ENCODE measurements at regions of chr9 and their contacts with region 1.

Region 1: GRCh38 chr9:129737479-129738274 is 15.2 kb downstream of the PTGES start:
- DNase-seq: peak; percentile 88
- H3K4me3 Mint-ChIP-seq: peak overlapping the region; percentile 53
- H3K27ac Mint-ChIP-seq: peak overlapping the region; percentile 55
- H3K4me1 Mint-ChIP-seq: peaks cover 11% of the 10 kb centered on the region
- H3K27me3 Mint-ChIP-seq: peaks cover 1% of the 10 kb centered on the region

Region 2: DNA sequence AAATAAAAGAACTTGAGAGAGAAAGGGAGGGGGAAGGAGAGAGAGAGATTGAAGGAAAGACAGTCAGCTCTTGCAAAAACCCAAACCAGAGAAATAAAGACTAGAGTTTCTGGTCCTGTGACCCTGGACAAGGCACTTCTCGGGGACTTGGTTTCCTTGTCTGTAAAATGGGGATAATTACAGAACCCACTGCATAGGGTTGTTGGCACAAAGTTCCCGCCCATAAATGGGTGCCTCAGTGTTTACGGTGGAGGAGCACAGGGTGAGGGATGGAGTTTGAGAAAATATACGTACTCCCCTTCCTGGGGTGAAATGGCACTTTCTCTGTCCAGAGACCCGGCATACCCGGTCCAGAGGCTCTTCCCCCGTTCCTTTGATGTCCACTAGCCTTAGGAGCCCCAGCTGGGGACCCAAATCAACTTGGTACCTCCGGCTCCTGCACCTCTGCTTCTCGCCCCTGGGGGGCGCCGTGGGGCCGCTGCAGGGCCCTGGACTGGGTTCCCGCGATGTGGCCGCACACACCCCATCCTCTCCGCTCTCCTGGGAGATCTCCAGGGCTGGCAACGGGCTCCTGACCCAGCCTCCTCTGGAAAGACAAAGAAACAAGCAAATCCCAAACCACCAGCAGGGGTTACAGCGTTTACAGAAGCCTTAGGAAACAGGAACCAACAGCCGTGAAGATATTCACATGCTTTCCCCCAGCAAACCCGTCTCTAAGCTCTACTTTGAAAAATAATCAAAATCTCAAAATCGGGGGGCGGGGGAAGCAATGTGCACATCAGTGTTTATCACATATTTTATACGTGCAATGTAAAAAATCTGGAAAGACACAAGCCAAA is 11.1 kb before region 1 on chr9:
- CTCF ChIA-PET with region 1: interaction called, 81 read pairs
- POLR2A ChIA-PET with region 1: interaction called, 8 read pairs
- DNase-seq: peak; percentile 68
- H3K4me3 Mint-ChIP-seq: no peak overlapping the region
- H3K27ac Mint-ChIP-seq: no peak overlapping the region
- H3K4me1 Mint-ChIP-seq: peaks cover 3% of the 10 kb centered on the region
- H3K27me3 Mint-ChIP-seq: peaks cover 10% of the 10 kb centered on the region

Region 3: GRCh38 chr9:129749992-129750391 is 12.3 kb after region 1 on chr9:
- CTCF ChIA-PET with region 1: interaction called, 15 read pairs
- POLR2A ChIA-PET with region 1: interaction called, 3 read pairs
- DNase-seq: no peak
- H3K4me3 Mint-ChIP-seq: no peak overlapping the region
- H3K27ac Mint-ChIP-seq: no peak overlapping the region
- H3K4me1 Mint-ChIP-seq: peaks cover 7% of the 10 kb centered on the region
- H3K27me3 Mint-ChIP-seq: peaks cover 10% of the 10 kb centered on the region

Region 4: DNA sequence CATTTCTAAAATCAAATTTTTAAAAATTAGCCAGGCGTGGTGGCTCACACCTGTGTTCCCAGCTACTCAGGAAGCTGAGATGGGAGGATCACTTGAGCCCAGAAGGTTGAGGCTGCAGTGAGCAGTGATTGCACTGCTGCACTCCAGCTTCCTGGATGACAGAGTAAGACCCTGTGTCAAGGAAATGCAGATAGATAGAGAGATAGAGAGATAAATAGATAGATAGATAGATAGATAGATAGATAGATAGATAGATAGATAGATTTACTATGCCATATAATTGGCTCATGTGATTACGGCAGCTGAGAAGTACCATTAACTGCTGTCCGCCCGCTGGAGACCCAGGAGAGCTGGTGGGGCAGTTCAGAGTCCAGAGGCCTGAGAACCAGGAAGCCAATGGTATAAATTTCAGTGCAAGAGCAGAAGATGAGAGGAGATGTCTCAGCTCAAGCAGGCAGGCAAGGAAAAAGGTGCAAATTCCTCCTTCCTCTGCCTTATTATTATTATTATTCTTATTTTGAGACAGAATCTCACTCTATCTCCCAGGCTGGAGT is 28.2 kb after region 1 on chr9:
- CTCF ChIA-PET with region 1: interaction called, 19 read pairs
- POLR2A ChIA-PET with region 1: no interaction called
- DNase-seq: no peak
- H3K4me3 Mint-ChIP-seq: no peak overlapping the region
- H3K27ac Mint-ChIP-seq: no peak overlapping the region
- H3K4me1 Mint-ChIP-seq: peaks cover 5% of the 10 kb centered on the region
- H3K27me3 Mint-ChIP-seq: peaks cover 9% of the 10 kb centered on the region

Region 5: GRCh38 chr9:129776938-129777768 is 39.5 kb after region 1 on chr9:
- CTCF ChIA-PET with region 1: interaction called, 47 read pairs
- POLR2A ChIA-PET with region 1: interaction called, 5 read pairs
- DNase-seq: peak; percentile 56
- H3K4me3 Mint-ChIP-seq: no peak overlapping the region
- H3K27ac Mint-ChIP-seq: no peak overlapping the region
- H3K4me1 Mint-ChIP-seq: peaks cover 11% of the 10 kb centered on the region
- H3K27me3 Mint-ChIP-seq: peaks cover 16% of the 10 kb centered on the region

Region 6: DNA sequence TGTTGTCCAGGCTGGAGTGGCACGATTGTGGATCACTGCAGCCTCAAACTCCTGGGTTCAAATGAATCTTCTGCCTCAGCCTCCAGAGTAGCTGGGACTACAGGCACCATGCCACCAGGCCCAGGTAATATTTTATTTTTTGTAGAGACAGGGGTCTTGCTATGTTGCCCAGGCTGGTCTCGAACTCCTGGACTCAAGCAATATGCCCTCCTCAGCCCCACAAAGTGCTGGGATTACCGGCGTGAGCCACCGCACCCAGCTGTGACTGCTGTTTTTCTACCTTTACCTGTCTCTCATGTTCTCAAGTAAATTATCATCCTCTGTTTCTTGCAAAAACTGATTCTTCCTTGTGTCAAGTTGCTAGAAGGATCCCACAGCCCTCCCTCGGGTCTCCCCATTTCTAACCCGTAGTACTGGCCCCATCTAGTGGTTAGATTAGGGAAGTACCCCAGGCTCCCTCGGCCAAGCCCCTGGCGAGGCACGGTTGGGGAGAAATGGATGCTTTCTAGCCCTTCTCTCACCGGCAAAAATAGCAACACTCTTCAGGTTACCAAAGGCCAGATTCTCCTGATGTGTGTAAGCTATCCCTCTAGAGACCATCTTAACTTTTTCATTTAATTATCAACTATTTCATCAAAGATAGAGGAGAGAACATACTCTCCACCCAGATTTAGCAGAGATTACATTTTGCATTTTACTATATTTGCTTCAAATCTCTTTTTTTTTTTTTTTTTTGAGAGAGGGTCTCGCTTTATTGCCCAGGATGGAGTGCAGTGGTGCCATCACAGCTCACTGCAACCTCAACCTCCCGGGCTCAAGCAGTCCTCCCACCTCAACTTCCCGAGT is 46.1 kb after region 1 on chr9:
- CTCF ChIA-PET with region 1: interaction called, 47 read pairs
- POLR2A ChIA-PET with region 1: interaction called, 5 read pairs
- DNase-seq: peak; percentile 74
- H3K4me3 Mint-ChIP-seq: no peak overlapping the region
- H3K27ac Mint-ChIP-seq: no peak overlapping the region
- H3K4me1 Mint-ChIP-seq: peaks cover 3% of the 10 kb centered on the region
- H3K27me3 Mint-ChIP-seq: peaks cover 30% of the 10 kb centered on the region

Measured in activated CD4-positive, alpha-beta memory T cell treated with anti-CD3 and anti-CD28 coated beads, Interleukin-2, amount 10 ng/mL, durations not matched to agents 7 days and 5 days (primary cell).